Psoas muscle (tissue), 8 donors: ENCODE measurements at regions of chr10 and their contacts with region 1.

Region 1: GRCh38 chr10:132654702-132655661 is 117.4 kb downstream of the INPP5A start:
- DNase-seq: peak; percentile 44 to 73
- ATAC-seq: peak; percentile 66 to 80 (median 67)
- H3K4me3 ChIP-seq: no peak overlapping the region
- H3K27ac ChIP-seq: no peak overlapping the region
- H3K4me1 ChIP-seq: no peaks in the 10 kb centered on the region
- H3K27me3 ChIP-seq: no peaks in the 10 kb centered on the region
- CTCF ChIP-seq: peak; percentile 86

Region 2: GRCh38 chr10:132516771-132517725 is 137.9 kb before region 1 on chr10:
- intact Hi-C with region 1: no loop called
- DNase-seq: peak; percentile 94 to 97
- ATAC-seq: peak; percentile 90 to 96 (median 92)
- H3K4me3 ChIP-seq: peak overlapping the region; percentile 53
- H3K27ac ChIP-seq: peak overlapping the region; percentile 89
- H3K4me1 ChIP-seq: peaks cover 47% of the 10 kb centered on the region
- H3K27me3 ChIP-seq: no peaks in the 10 kb centered on the region
- CTCF ChIP-seq: no peak

Region 3: GRCh38 chr10:132788180-132788830 is 133.3 kb after region 1 on chr10:
- intact Hi-C with region 1: loop called (anchors 5 to 10 kb)
- DNase-seq: no peak
- ATAC-seq: peak in 3 of 4 donors; percentile 33 to 55 (median 41)
- H3K4me3 ChIP-seq: no peak overlapping the region
- H3K27ac ChIP-seq: no peak overlapping the region
- H3K4me1 ChIP-seq: peaks cover 9% of the 10 kb centered on the region
- H3K27me3 ChIP-seq: peaks cover 0 to 87% (median 38%) of the 10 kb centered on the region in 3 donors
- CTCF ChIP-seq: no peak

Region 4: GRCh38 chr10:132793871-132794849 is 139.2 kb after region 1 on chr10:
- intact Hi-C with region 1: loop called (anchors 5 to 10 kb)
- DNase-seq: no peak
- ATAC-seq: no peak
- H3K4me3 ChIP-seq: no peak overlapping the region
- H3K27ac ChIP-seq: no peak overlapping the region
- H3K4me1 ChIP-seq: no peaks in the 10 kb centered on the region
- H3K27me3 ChIP-seq: peaks cover 0 to 50% (median 9%) of the 10 kb centered on the region in 3 donors
- CTCF ChIP-seq: no peak

Region 5: DNA sequence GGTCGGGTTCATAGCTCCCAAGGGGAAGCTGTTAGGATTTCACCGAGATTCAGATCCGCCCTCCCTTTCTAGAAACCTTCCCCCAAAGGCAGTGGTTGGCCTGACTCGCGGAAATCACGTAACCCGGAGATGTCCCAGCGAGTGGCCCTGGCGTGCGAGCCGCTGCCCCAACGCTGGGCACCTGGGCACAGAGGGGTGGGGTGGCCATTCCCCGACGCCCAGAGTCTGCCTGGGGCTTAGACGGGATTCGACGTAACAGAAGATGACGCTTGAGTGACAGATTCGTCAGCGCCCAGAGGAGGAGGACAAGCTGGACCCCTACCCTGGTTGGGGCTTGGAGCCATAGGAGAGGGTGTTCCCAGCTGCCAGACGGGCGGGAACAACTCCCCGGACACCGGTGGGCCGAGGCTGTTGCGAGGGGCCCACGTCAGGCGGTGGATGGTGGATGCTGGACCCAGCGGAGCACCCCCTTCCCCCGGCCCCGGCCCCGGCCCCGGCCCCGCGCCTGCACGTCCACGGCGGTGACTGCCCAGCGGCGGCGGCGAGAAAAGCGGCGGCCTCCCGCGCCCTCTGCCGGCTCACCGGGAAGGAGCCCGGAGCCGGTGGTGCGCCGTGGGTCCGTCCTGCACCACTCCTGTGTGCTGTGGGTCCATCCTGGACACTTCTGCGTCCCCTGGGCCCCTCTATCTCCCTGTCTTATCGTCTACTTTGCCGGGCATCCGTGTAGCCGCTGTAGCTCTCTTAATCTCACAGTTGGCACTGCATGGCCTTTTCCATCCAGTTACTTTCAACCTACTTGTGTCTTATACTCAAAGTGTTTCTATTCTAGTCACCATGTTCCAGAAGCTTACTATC is 469.6 kb after region 1 on chr10:
- intact Hi-C with region 1: loop called in 1 of 2 experiments (anchors 10 kb)
- DNase-seq: peak; percentile 27 to 72
- ATAC-seq: peak; percentile 83 to 96 (median 92)
- H3K4me3 ChIP-seq: no peak overlapping the region
- H3K27ac ChIP-seq: no peak overlapping the region
- H3K4me1 ChIP-seq: no peaks in the 10 kb centered on the region
- H3K27me3 ChIP-seq: peaks cover 0 to 3% (median 2%) of the 10 kb centered on the region in 3 donors
- CTCF ChIP-seq: peak; percentile 85